Calu3 (cell line): ENCODE measurements at regions of chr14 and their contacts with region 1.

Region 1: GRCh38 chr14:94051115-94051514 is 25.0 kb downstream of the OTUB2 start:
- DNase-seq: peak; percentile 38
- H3K4me3 Mint-ChIP-seq: no peak overlapping the region
- H3K27ac Mint-ChIP-seq: no peak overlapping the region
- H3K4me1 Mint-ChIP-seq: no peaks in the 10 kb centered on the region
- H3K27me3 Mint-ChIP-seq: no peaks in the 10 kb centered on the region
- CTCF ChIP-seq: peak; percentile 26

Region 2: DNA sequence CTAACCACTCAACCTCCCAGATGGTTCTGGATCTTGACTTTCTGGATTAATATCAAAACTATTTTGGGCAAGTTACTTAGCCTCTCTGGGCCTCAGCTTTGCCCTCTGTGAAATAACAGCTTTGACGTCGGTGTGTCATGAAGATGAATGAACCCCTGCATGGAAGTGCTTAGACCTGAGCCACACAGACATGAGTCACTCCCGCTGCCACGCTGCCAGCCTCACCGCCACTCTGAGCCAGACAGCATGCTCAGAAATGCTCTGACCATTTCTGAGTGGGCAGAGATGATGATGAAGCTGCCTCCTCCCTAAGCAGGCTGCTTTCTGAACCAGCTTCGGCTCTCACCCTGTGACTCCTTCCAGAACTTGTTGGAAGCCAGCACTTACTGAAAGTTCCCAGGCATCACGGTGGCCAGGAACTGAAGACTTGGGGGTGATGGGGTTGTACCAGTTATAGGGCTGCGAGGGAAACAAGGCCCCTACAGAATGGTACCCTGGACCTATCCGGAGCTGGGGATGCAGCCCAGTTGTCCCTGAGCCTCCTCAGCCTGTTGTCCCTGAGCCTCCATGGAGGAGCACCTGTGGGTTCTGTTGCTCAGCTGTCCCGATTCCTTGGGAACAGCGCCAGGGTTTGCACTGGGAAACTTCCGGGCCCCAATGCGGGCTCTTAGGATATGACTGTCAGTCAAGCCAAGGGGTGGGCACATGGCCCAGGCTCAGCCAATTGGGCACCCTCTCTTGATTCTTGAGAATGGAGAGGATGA is 56.0 kb before region 1 on chr14:
- CTCF ChIA-PET with region 1: no interaction called
- intact Hi-C with region 1: no loop called
- DNase-seq: peak; percentile 61
- H3K4me3 Mint-ChIP-seq: no peak overlapping the region
- H3K27ac Mint-ChIP-seq: no peak overlapping the region
- H3K4me1 Mint-ChIP-seq: peaks cover 20% of the 10 kb centered on the region
- H3K27me3 Mint-ChIP-seq: peaks cover 9% of the 10 kb centered on the region
- CTCF ChIP-seq: no peak

Region 3: GRCh38 chr14:94180655-94181271 is 129.6 kb after region 1 on chr14:
- CTCF ChIA-PET with region 1: no interaction called
- intact Hi-C with region 1: loop called (anchors 2 kb)
- DNase-seq: no peak
- H3K4me3 Mint-ChIP-seq: peak overlapping the region; percentile 17
- H3K27ac Mint-ChIP-seq: no peak overlapping the region
- H3K4me1 Mint-ChIP-seq: peaks cover 10% of the 10 kb centered on the region
- H3K27me3 Mint-ChIP-seq: peaks cover 45% of the 10 kb centered on the region
- CTCF ChIP-seq: peak; percentile 42

Region 4: GRCh38 chr14:95265106-95266094 is 1214.3 kb after region 1 on chr14:
- CTCF ChIA-PET with region 1: no interaction called
- intact Hi-C with region 1: no loop called
- DNase-seq: peak; percentile 84
- H3K4me3 Mint-ChIP-seq: peak overlapping the region; percentile 51
- H3K27ac Mint-ChIP-seq: peak overlapping the region; percentile 96
- H3K4me1 Mint-ChIP-seq: peaks cover 43% of the 10 kb centered on the region
- H3K27me3 Mint-ChIP-seq: no peaks in the 10 kb centered on the region
- CTCF ChIP-seq: no peak

Region 5: GRCh38 chr14:95515596-95516552 is 1464.8 kb after region 1 on chr14:
- CTCF ChIA-PET with region 1: no interaction called
- intact Hi-C with region 1: no loop called
- DNase-seq: peak; percentile 66
- H3K4me3 Mint-ChIP-seq: peak overlapping the region; percentile 64
- H3K27ac Mint-ChIP-seq: no peak overlapping the region
- H3K4me1 Mint-ChIP-seq: peaks cover 18% of the 10 kb centered on the region
- H3K27me3 Mint-ChIP-seq: no peaks in the 10 kb centered on the region
- CTCF ChIP-seq: peak; percentile 37